HAP-1 (cell line): ENCODE measurements at regions of chr18 and their contacts with region 1.

Region 1: GRCh38 chr18:623761-624620 is 27.2 kb downstream of the CLUL1 start:
- DNase-seq: peak; percentile 70 to 85
- H3K4me3 ChIP-seq: no peak overlapping the region
- H3K4me1 ChIP-seq: peaks cover 7% of the 10 kb centered on the region; the same call in 1 of the 2 replicates
- H3K27me3 ChIP-seq: no peaks in the 10 kb centered on the region; the same call in 1 of the 2 replicates

Region 2: GRCh38 chr18:427005-427404 is 197.0 kb before region 1 on chr18:
- in situ Hi-C with region 1: no loop called
- DNase-seq: no peak
- H3K4me3 ChIP-seq: no peak overlapping the region
- H3K4me1 ChIP-seq: no peaks in the 10 kb centered on the region
- H3K27me3 ChIP-seq: no peaks in the 10 kb centered on the region

Region 3: GRCh38 chr18:519019-519879 is 104.7 kb before region 1 on chr18:
- in situ Hi-C with region 1: no loop called
- DNase-seq: no peak
- H3K4me3 ChIP-seq: no peak overlapping the region
- H3K4me1 ChIP-seq: no peaks in the 10 kb centered on the region
- H3K27me3 ChIP-seq: no peaks in the 10 kb centered on the region

Region 4: DNA sequence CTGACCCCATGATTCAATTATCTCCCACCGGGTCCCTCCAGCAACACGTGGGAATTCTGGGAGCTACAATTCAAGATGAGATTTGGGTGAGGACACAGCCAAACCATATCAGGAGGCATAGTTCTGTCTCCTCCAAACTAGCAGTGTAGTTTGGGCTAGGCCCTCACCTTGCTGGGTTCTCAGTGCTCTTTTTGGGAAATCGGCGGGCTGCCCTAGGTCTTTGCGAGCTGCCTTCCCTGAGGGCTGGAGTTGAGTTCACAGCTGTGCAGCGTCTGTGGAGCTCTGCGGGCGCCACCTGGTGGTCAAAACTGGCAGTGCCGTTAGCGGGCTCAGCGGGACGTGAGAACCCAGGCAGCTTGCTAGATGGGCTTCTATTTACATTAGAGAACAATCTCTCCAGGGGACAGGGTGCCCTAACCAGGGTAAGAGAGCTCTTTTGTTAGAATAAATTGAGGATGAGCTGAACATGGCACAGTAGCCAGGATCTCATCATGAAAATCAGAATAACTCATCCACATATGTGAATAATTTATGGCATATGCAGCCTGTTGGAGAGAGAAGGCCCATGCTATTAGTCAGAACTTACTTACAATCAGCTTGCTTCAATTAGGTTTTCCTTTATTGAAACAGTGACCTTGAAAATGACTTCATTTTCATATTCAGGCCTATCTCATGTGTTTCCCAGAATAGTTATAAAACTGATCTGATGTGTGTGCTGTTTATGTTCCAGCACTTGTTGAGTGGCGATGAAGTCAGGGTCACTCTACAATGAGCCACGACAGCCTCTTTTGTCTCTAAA is 215.4 kb after region 1 on chr18:
- in situ Hi-C with region 1: loop called (anchors 10 kb)
- DNase-seq: peak; percentile 79 to 97
- H3K4me3 ChIP-seq: no peak overlapping the region
- H3K4me1 ChIP-seq: peaks cover 26% of the 10 kb centered on the region
- H3K27me3 ChIP-seq: no peaks in the 10 kb centered on the region